ENCODE measurements at regions of chr1 and their contacts with region 1.

Region 1: GRCh38 chr1:111769517-111770146 is 13.9 kb downstream of the DDX20 start:
- DNase-seq: peak in 2 of 6 donors; percentile 18 to 34
- ATAC-seq: peak; percentile 81 to 91 (median 89)
- H3K4me3 ChIP-seq: no peak overlapping the region
- H3K27ac ChIP-seq: no peak overlapping the region
- H3K4me1 ChIP-seq: peaks cover 0 to 6% (median 0%) of the 10 kb centered on the region in 3 donors
- H3K27me3 ChIP-seq: no peaks in the 10 kb centered on the region
- CTCF ChIP-seq: peak; percentile 37 to 79 (median 66)

Region 2: GRCh38 chr1:111222308-111223125 is 547.1 kb before region 1 on chr1:
- intact Hi-C with region 1: loop called in 1 of 3 experiments (anchors 10 kb)
- DNase-seq: peak; percentile 40 to 88 (median 81)
- ATAC-seq: peak; percentile 89 to 96 (median 92)
- H3K4me3 ChIP-seq: no peak overlapping the region
- H3K27ac ChIP-seq: no peak overlapping the region
- H3K4me1 ChIP-seq: peaks cover 0 to 8% (median 7%) of the 10 kb centered on the region in 3 donors
- H3K27me3 ChIP-seq: no peaks in the 10 kb centered on the region
- CTCF ChIP-seq: peak; percentile 71 to 86 (median 77)

Region 3: DNA sequence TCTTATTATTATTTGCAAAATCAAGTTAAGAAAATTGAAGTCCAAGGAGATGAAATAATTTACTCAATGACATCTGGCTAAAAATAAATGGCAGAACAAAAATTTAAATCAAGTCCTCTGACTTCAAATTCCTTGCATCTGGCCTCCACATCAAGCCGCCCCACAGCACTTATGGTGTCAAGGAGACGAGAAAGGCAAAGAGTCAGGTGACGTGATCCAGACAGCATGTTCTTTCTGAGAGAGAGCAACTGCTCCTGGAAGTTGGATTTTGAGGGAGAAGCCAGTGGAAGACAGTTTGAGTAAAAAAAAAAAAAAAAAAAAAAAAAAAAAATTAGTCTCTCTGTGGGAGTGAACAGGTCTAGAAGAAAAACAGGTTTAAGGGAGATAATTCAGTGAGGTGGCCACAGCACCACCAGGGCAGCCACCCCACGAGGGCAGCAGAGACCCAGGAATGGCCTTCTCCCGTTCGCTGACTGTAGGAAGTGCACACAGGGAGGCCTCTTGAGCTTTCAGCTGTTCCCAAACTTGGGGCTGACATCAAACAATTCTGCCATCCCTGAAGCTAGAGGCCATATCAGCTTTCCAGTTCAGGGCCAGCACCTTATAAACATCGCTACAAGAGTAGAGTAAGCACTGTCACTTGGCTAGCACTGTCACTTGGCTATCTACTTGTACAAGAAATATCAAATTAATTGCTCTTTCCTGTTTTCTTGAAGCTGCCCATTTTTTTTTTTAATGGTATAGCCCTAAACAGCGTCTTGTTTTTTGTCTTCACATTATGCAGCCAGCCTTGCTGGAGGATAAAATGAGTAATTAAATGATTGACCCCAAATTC is 288.0 kb before region 1 on chr1:
- intact Hi-C with region 1: loop called in 1 of 3 experiments (anchors 10 kb)
- DNase-seq: peak in 5 of 6 donors; percentile 22 to 73 (median 58)
- ATAC-seq: peak; percentile 82 to 99 (median 98)
- H3K4me3 ChIP-seq: no peak overlapping the region
- H3K27ac ChIP-seq: no peak overlapping the region
- H3K4me1 ChIP-seq: no peaks in the 10 kb centered on the region
- H3K27me3 ChIP-seq: no peaks in the 10 kb centered on the region
- CTCF ChIP-seq: peak in 3 of 4 donors; percentile 31 to 47 (median 34)

Region 4: DNA sequence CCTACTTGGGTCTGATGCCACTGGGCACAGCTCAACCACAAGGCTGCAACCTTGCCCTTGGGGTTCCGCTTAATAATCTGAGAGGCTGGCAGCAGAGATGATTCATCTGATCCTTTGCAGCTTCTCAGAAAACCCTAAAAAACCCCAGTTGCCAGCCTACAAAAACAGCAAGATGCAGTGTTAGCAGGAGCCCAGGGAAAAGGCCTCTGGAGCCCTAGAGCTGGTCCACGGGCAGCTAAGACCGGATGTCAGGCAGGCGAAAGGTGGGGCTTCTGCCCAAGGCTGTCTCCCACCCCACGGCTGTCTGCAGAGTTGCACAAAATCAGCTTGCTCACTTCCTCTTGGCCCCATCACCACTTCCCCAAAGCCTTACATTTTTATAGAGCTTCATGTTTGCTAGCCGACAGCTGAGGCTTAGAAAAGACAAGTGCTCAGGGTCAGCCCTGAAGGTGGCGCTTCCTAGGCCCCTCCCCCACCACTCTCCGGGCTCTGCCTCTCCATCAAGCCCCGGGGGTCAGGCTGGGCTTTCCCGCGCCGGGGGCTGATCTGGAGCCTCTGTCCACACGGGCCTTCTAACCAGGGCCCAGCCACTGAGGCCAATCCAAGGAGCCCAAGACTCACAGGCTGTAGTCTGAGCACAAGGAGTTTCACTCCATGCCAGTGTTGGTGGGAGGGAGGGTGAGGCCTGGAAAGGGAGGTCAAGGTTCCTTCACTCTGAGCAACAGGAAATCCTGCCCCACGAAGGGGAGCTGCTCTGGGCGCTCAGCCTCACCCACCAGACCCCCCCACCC is 262.0 kb before region 1 on chr1:
- intact Hi-C with region 1: loop called in 1 of 3 experiments (anchors 10 kb)
- DNase-seq: peak in 4 of 6 donors; percentile 59 to 79 (median 73)
- ATAC-seq: peak; percentile 71 to 78 (median 74)
- H3K4me3 ChIP-seq: peak overlapping the region in 2 of 4 donors; percentile 19 to 36
- H3K27ac ChIP-seq: peak overlapping the region; percentile 54 to 92 (median 74)
- H3K4me1 ChIP-seq: peaks cover 0 to 17% (median 0%) of the 10 kb centered on the region in 3 donors
- H3K27me3 ChIP-seq: no peaks in the 10 kb centered on the region
- CTCF ChIP-seq: no peak

Region 5: GRCh38 chr1:112006416-112006815 is 236.8 kb after region 1 on chr1:
- intact Hi-C with region 1: no loop called
- DNase-seq: no peak
- ATAC-seq: no peak
- H3K4me3 ChIP-seq: no peak overlapping the region
- H3K27ac ChIP-seq: no peak overlapping the region
- H3K4me1 ChIP-seq: no peaks in the 10 kb centered on the region
- H3K27me3 ChIP-seq: no peaks in the 10 kb centered on the region
- CTCF ChIP-seq: no peak

Measured in pancreas (tissue), 10 donors.